Activated CD8-positive, alpha-beta T cell treated with anti-CD3 and anti-CD28 coated beads, Interleukin-2, amount 10 ng/mL, durations not matched to agents 7 days and 5 days (primary cell): ENCODE measurements at regions of chr7 and their contacts with region 1.

Region 1: GRCh38 chr7:620052-620451 is 100.4 kb upstream of the PDGFA start:
- DNase-seq: peak; percentile 32
- ATAC-seq: no peak
- H3K4me3 Mint-ChIP-seq: peak overlapping the region; percentile 17
- H3K27ac Mint-ChIP-seq: peak overlapping the region; percentile 99
- H3K4me1 Mint-ChIP-seq: peaks cover 37% of the 10 kb centered on the region
- H3K27me3 Mint-ChIP-seq: no peaks in the 10 kb centered on the region

Region 2: DNA sequence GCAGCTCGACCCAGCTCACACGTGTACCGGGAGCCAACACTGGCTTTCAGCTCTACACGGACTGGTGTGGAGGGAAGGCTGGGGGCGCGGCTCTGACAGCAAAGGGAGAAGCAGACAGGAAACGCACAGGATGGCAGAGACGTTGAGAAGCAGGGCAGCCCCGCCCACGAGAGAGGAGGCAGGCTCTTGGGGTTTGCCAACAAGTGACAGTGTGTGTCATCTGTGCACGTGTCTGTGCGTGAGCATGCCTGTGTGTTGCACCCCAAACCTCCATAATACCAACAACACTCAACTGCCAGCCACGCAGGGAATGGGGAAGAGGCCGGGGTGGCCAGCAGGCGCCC is 36.0 kb before region 1 on chr7:
- CTCF ChIA-PET with region 1: interaction called, 3 read pairs
- POLR2A ChIA-PET with region 1: interaction called, 31 read pairs
- DNase-seq: peak; percentile 93
- ATAC-seq: peak; percentile 94
- H3K4me3 Mint-ChIP-seq: peak overlapping the region; percentile 79
- H3K27ac Mint-ChIP-seq: peak overlapping the region; percentile 92
- H3K4me1 Mint-ChIP-seq: peaks cover 37% of the 10 kb centered on the region
- H3K27me3 Mint-ChIP-seq: no peaks in the 10 kb centered on the region

Region 3: DNA sequence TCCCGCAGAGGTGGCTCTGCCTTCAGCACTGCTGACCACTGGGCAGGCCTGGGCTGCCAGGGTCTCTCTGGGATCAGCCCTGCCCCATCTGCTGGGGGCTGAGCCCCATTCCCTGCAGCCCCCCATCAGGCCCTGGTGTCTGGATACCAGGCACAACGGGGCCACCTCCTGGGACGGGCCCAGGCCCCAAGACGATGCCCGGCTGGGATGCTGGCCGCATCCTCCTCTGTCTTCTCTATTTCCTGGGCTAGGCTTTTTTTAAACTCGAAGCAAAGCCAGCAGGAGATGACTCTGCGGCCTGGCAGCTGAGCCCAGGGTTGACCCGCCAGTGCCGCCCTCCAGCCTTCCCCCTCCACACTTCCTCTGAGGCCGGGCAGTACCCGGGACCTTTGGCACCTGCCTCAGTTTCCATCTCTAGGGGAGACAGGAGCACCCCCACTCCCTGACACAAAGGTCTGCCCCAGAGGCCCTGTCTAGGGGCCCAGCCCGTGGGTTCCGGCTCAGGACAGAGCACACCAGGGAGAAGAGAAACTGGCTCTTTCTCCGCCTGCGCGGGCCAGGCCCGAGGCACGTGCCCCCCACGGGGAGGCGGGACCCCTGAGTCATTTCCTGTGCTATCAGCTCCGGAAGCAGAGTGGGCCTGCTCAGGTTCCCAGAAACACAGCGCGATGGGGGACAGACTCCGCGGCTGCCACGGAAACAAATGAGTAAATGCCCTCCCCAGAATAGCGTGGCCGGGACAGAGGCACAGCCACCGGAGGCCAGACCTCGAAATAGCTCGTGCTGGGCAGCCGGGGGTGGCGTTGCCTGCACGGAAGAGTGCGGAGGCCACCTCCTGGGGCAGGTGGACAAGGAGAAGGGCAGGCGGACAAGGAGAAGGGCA is 15.8 kb before region 1 on chr7:
- CTCF ChIA-PET with region 1: interaction called, 6 read pairs
- POLR2A ChIA-PET with region 1: interaction called, 128 read pairs
- DNase-seq: peak; percentile 97
- ATAC-seq: peak; percentile 83
- H3K4me3 Mint-ChIP-seq: peak overlapping the region; percentile 92
- H3K27ac Mint-ChIP-seq: peak overlapping the region; percentile 100
- H3K4me1 Mint-ChIP-seq: peaks cover 75% of the 10 kb centered on the region
- H3K27me3 Mint-ChIP-seq: no peaks in the 10 kb centered on the region

Region 4: GRCh38 chr7:726084-726853 is 106.2 kb after region 1 on chr7 and contains the start of gene DNAAF5:
- CTCF ChIA-PET with region 1: no interaction called
- POLR2A ChIA-PET with region 1: interaction called, 10 read pairs
- DNase-seq: peak; percentile 91
- ATAC-seq: peak; percentile 86
- H3K4me3 Mint-ChIP-seq: peak within 1 kb of the TSS; percentile 81
- H3K27ac Mint-ChIP-seq: peak within 1 kb of the TSS; percentile 90
- H3K4me1 Mint-ChIP-seq: peaks cover 28% of the 10 kb centered on the region
- H3K27me3 Mint-ChIP-seq: no peaks in the 10 kb centered on the region
- total RNA-seq, gene DNAAF5: 25.5 to 27.0 TPM